ENCODE measurements at regions of chr4 and their contacts with region 1.

Region 1: GRCh38 chr4:57442831-57443291 is 332.7 kb upstream of the IGFBP7 start:
- DNase-seq: peak in 3 of 5 donors; percentile 22 to 43 (median 31)
- ATAC-seq: peak; percentile 62 to 82 (median 69)
- H3K4me3 ChIP-seq: no peak overlapping the region
- H3K27ac ChIP-seq: peak overlapping the region in 2 of 12 donors; percentile 1 to 30
- H3K4me1 ChIP-seq: peaks cover 0 to 16% (median 0%) of the 10 kb centered on the region in 12 donors
- H3K27me3 ChIP-seq: no peaks in the 10 kb centered on the region
- CTCF ChIP-seq: peak; percentile 55 to 80 (median 69)
- POLR2A ChIP-seq: no peak

Region 2: DNA sequence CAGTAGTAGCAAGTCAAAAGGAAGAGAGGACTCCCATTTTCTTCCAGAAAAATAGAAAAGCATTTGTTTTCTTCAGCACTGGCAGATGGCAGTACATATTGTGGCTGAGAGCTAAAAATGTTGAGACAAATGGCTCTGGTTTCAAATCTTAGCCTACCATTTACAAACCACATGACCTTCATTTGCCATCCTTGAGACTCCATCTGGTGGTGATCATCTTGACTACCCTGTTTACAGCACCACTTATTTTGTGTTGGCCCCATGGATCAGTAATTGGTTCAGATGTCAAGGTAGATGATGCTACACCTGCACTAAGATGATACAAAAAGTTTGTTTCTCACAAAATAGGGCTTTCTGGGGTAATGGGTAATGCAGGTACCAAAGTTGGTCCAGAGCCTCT is 619.1 kb after region 1 on chr4:
- intact Hi-C with region 1: loop called in 5 of 10 experiments (anchors 2 to 10 kb)
- DNase-seq: no peak
- ATAC-seq: no peak
- H3K4me3 ChIP-seq: no peak overlapping the region
- H3K27ac ChIP-seq: no peak overlapping the region
- H3K4me1 ChIP-seq: no peaks in the 10 kb centered on the region
- H3K27me3 ChIP-seq: no peaks in the 10 kb centered on the region
- CTCF ChIP-seq: peak in 7 of 12 donors; percentile 6 to 39 (median 20)
- POLR2A ChIP-seq: no peak